ENCODE measurements at regions of chr15 and their contacts with region 1.

Region 1: DNA sequence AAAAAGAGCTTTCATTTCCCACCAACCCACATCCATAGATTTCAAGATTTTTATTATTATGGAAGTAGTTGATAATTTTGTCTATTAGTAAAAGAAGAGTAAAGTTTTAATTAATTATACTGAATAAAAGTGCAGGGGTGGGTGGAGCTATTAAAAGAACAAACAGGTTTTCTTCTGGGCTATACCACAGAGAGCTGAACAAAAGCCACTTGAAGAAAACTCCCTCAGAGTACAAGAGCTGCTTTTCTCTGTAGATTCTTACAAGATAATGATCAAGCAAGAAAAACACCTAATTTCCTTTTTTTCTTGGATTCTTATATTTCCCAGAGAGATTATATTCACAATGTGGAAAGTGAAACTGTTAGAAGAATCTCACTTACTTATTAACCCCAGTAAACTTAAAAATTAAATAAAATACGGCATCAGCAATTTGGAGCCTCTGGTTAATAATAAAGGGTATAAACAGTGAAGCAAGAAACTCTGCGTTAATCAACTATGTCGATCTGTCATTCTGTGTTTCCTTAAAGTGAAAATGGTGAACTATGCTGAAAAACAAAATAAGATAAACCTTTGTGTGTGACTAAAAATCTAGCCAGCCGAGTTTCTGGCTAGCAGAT is 84.9 kb downstream of the THBS1 start:
- DNase-seq: no peak
- H3K4me3 ChIP-seq: no peak overlapping the region
- H3K4me3 Mint-ChIP-seq: peak overlapping the region in 1 of 7 donors; percentile 19
- H3K27ac ChIP-seq: no peak overlapping the region
- H3K27ac Mint-ChIP-seq: peak overlapping the region in 3 of 8 donors; percentile 15 to 49 (median 47)
- H3K4me1 ChIP-seq: no peaks in the 10 kb centered on the region
- H3K4me1 Mint-ChIP-seq: peaks cover 21 to 33% (median 30%) of the 10 kb centered on the region in 3 donors
- H3K27me3 ChIP-seq: no peaks in the 10 kb centered on the region
- H3K27me3 Mint-ChIP-seq: no peaks in the 10 kb centered on the region

Region 2: DNA sequence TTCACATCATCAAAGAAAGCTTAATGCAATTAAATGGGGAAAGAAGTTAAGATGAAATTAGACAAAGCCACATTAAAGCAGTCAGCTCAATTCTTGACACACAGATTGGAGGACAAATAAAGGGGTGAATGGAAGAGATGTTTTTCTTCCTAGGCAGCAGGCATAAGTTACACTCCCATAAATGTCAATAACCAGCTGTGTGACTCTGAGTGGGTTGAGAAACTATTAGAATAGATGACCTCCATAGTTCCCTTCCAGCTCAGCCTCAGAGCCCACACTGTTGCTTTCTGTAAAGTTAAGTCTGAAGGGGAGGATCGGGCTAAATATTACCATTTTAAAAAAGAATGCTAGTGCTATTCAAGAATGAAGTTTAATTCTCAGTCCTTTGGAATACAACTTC is 13.8 kb before region 1 on chr15:
- CTCF ChIA-PET with region 1: interaction called, 10 read pairs
- POLR2A ChIA-PET with region 1: no interaction called
- DNase-seq: no peak
- H3K4me3 ChIP-seq: no peak overlapping the region
- H3K4me3 Mint-ChIP-seq: no peak overlapping the region
- H3K27ac ChIP-seq: no peak overlapping the region
- H3K27ac Mint-ChIP-seq: no peak overlapping the region
- H3K4me1 ChIP-seq: no peaks in the 10 kb centered on the region
- H3K4me1 Mint-ChIP-seq: peaks cover 0 to 4% (median 2%) of the 10 kb centered on the region in 3 donors
- H3K27me3 ChIP-seq: no peaks in the 10 kb centered on the region
- H3K27me3 Mint-ChIP-seq: peaks cover 0 to 3% of the 10 kb centered on the region in 2 donors

Region 3: DNA sequence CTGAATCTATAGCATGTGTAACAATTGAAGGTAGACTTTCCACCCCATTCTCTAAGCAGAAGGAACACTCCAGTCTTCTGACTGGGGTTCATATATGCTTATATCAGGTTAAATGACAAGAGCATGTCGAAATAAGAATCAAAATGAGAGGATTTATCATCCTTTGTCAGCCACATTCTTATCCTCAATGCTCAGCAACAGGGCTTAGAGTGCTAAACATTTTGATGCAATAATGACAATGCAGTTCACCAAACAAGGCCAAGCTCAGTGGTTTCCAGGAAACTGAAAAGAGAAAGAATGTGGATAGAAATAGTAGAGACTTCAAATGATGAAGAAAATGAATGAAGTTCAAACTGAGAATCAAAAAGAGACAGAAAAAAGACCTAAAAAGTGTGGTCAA is 39.0 kb after region 1 on chr15:
- CTCF ChIA-PET with region 1: no interaction called
- POLR2A ChIA-PET with region 1: no interaction called
- DNase-seq: no peak
- H3K4me3 ChIP-seq: no peak overlapping the region
- H3K4me3 Mint-ChIP-seq: no peak overlapping the region
- H3K27ac ChIP-seq: no peak overlapping the region
- H3K27ac Mint-ChIP-seq: no peak overlapping the region
- H3K4me1 ChIP-seq: no peaks in the 10 kb centered on the region
- H3K4me1 Mint-ChIP-seq: no peaks in the 10 kb centered on the region
- H3K27me3 ChIP-seq: no peaks in the 10 kb centered on the region
- H3K27me3 Mint-ChIP-seq: no peaks in the 10 kb centered on the region